Activated CD8-positive, alpha-beta memory T cell treated with anti-CD3 and anti-CD28 coated beads, Interleukin-2, amount 10 ng/mL, durations not matched to agents 7 days and 5 days (primary cell): ENCODE measurements at regions of chr1 and their contacts with region 1.

Region 1: GRCh38 chr1:159780583-159781582 is at the start of gene DUSP23:
- DNase-seq: peak; percentile 98
- ATAC-seq: peak; percentile 99
- H3K4me3 Mint-ChIP-seq: peak within 1 kb of the TSS; percentile 72
- H3K27ac Mint-ChIP-seq: peak within 1 kb of the TSS; percentile 69
- H3K4me1 Mint-ChIP-seq: peaks cover 20% of the 10 kb centered on the region
- H3K27me3 Mint-ChIP-seq: peaks cover 3% of the 10 kb centered on the region
- total RNA-seq, gene DUSP23: 23.0 to 26.5 TPM

Region 2: GRCh38 chr1:159829273-159829634 is 48.4 kb after region 1 on chr1:
- CTCF ChIA-PET with region 1: interaction called, 11 read pairs
- DNase-seq: no peak
- ATAC-seq: no peak
- H3K4me3 Mint-ChIP-seq: no peak overlapping the region
- H3K27ac Mint-ChIP-seq: no peak overlapping the region
- H3K4me1 Mint-ChIP-seq: peaks cover 48% of the 10 kb centered on the region
- H3K27me3 Mint-ChIP-seq: peaks cover 29% of the 10 kb centered on the region

Region 3: DNA sequence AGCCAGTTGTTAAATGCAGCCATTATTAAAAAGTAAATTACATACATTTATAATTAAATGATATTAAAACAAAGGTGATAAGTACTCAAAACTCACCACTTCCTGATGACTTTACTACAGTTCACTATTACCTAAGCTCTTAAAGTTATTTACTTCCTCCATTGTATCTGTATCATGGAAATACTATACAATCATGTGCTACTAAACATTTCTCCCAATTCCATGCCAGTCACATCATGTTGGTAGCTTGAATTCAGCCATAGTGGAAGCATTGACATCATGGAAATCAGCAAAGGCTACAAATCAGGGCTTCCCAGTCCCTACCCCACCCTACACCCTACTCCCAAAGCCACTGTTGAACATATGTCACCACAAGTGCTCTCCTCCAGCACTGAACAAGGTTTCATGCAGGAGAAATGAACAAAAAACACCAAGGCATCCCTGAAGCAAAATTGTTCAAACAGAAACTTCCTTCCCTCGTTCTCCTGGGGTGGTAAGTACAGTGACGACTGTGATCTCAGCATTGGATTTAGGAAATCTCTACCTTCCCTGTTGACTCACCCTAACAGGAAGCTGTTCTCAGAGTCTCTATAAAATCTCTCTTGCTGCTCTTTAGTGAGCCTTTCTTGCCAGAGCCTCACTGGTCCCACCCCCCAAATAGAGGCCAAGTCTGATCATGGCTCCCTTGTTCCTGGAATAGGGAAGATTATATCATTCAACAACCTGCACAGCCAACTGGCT is 68.9 kb after region 1 on chr1:
- CTCF ChIA-PET with region 1: no interaction called
- DNase-seq: no peak
- ATAC-seq: no peak
- H3K4me3 Mint-ChIP-seq: no peak overlapping the region
- H3K27ac Mint-ChIP-seq: no peak overlapping the region
- H3K4me1 Mint-ChIP-seq: peaks cover 6% of the 10 kb centered on the region
- H3K27me3 Mint-ChIP-seq: peaks cover 14% of the 10 kb centered on the region